Calu3 (cell line): ENCODE measurements at regions of chrX and their contacts with region 1.

Region 1: DNA sequence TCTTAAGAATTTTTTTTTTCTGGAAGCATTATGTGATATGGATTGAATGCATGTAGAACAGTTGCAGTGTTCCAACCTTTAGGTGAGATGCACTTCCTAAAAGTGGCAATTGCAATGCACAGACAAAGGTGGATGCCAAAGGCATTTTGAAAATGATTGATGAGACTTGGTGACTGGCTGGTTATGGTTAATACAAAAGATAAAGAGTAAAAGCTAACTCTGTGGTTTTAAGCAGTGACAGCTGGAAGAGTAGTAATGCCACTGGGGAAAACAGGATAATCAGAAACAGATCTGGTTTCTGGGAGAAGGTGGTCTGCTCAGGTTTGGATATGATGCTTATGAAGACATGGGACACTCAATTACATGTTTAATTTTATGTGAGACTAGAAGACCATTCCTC is 345.6 kb downstream of the RPA4 start:
- DNase-seq: no peak
- H3K4me3 Mint-ChIP-seq: no peak overlapping the region
- H3K27ac Mint-ChIP-seq: no peak overlapping the region
- H3K4me1 Mint-ChIP-seq: peaks cover 8% of the 10 kb centered on the region
- H3K27me3 Mint-ChIP-seq: no peaks in the 10 kb centered on the region
- CTCF ChIP-seq: no peak

Region 2: GRCh38 chrX:97159916-97160800 is 69.2 kb before region 1 on chrX:
- CTCF ChIA-PET with region 1: no interaction called
- intact Hi-C with region 1: loop called (anchors 5 kb)
- DNase-seq: peak; percentile 33
- H3K4me3 Mint-ChIP-seq: peak overlapping the region; percentile 40
- H3K27ac Mint-ChIP-seq: peak overlapping the region; percentile 87
- H3K4me1 Mint-ChIP-seq: peaks cover 24% of the 10 kb centered on the region
- H3K27me3 Mint-ChIP-seq: no peaks in the 10 kb centered on the region
- CTCF ChIP-seq: no peak

Region 3: GRCh38 chrX:97267381-97268181 is 38.3 kb after region 1 on chrX:
- CTCF ChIA-PET with region 1: no interaction called
- intact Hi-C with region 1: no loop called
- DNase-seq: no peak
- H3K4me3 Mint-ChIP-seq: no peak overlapping the region
- H3K27ac Mint-ChIP-seq: no peak overlapping the region
- H3K4me1 Mint-ChIP-seq: no peaks in the 10 kb centered on the region
- H3K27me3 Mint-ChIP-seq: no peaks in the 10 kb centered on the region
- CTCF ChIP-seq: no peak